ENCODE measurements at regions of chr20 and their contacts with region 1.

Region 1: DNA sequence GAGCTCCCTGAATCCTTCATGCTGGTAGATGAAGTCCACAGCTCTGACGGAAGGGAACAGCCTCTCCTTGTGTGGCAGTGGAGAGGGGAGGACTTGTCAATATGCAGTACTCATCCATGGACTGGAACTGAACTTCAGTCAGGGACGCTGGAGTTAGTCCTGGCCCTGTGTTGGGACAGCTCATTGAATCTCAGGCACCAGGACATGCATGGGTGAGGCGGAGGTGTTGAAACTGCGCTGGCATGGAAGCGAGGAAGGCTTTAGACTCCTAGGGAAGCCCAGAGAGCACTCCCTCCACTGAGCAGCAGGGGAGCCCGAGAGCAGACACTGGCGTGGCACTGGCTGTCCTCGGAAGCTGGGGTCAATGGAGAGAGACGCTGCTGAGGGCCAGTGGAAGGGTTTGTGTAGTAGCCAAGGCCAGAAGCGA is 161.3 kb upstream of the GGTLC1 start:
- ATAC-seq: peak in 5 of 8 experiments; percentile 39 to 84 (median 58)
- H3K4me3 ChIP-seq: no peak overlapping the region
- H3K27ac ChIP-seq: no peak overlapping the region
- H3K4me1 ChIP-seq: peaks cover 0 to 7% of the 10 kb centered on the region in 2 donors

Region 2: DNA sequence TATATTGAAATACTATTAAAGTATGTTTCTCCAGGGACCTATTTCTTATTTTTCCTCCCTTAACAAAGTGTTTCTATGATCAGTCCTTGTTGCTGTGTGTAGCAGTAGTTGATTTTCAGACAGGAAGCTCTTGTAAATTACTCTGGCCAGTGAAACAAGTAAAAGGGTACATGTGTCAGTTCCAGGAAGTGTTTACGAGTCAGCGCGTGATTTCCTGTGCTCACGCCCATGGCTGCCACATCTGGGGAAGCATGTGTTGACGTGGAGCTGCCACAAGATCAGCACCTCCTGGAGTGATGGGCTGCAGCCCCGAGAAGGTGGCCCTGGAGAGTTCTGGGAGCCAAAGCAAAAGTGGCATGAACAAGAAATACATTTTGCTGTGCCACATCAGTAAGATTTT is 122.7 kb before region 1 on chr20:
- in situ Hi-C with region 1: loop called in 1 of 9 experiments (anchors 25 kb)
- ATAC-seq: peak in 3 of 8 experiments; percentile 68 to 99 (median 93)
- H3K4me3 ChIP-seq: no peak overlapping the region
- H3K27ac ChIP-seq: no peak overlapping the region
- H3K4me1 ChIP-seq: no peaks in the 10 kb centered on the region